Gastrocnemius medialis (tissue), 4 donors: ENCODE measurements at regions of chr6 and their contacts with region 1.

Region 1: GRCh38 chr6:42661540-42662153 is 60.8 kb downstream of the PRPH2 start:
- DNase-seq: peak; percentile 53 to 83
- ATAC-seq: peak; percentile 86 to 90
- H3K4me3 ChIP-seq: no peak overlapping the region
- H3K27ac ChIP-seq: peak overlapping the region in 3 of 4 donors; percentile 44 to 54 (median 49)
- H3K4me1 ChIP-seq: peaks cover 6 to 13% of the 10 kb centered on the region in 2 donors
- H3K27me3 ChIP-seq: no peaks in the 10 kb centered on the region
- CTCF ChIP-seq: peak; percentile 90 to 95 (median 92)
- POLR2A ChIP-seq: no peak

Region 2: DNA sequence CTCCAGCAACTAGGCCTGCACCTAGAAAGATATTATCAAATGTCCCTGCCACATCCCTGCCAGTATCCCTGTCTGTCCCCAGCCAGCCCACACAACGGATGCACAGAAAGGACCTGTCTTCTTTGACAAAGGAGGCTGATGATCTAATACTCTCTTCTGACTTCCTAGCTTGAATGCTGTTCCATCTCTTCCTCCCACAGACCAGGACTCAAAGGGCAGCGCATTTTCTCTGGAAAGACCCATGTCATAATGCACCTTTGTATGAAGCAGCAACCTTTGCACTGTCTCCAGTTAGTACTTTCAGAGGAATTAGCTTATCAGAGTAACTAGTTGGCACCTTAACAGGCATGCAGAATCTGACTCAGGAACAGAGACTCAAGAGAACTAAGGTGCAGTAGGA is 664.6 kb before region 1 on chr6:
- in situ Hi-C with region 1: no loop called
- intact Hi-C with region 1: no loop called
- DNase-seq: no peak
- ATAC-seq: no peak
- H3K4me3 ChIP-seq: no peak overlapping the region
- H3K27ac ChIP-seq: no peak overlapping the region
- H3K4me1 ChIP-seq: no peaks in the 10 kb centered on the region
- H3K27me3 ChIP-seq: no peaks in the 10 kb centered on the region
- CTCF ChIP-seq: no peak
- POLR2A ChIP-seq: no peak

Region 3: GRCh38 chr6:42720739-42721138 is 59.1 kb after region 1 on chr6:
- in situ Hi-C with region 1: loop called (anchors 5 kb)
- intact Hi-C with region 1: no loop called
- DNase-seq: no peak
- ATAC-seq: no peak
- H3K4me3 ChIP-seq: no peak overlapping the region
- H3K27ac ChIP-seq: no peak overlapping the region
- H3K4me1 ChIP-seq: peaks cover 6 to 23% of the 10 kb centered on the region in 2 donors
- H3K27me3 ChIP-seq: no peaks in the 10 kb centered on the region
- CTCF ChIP-seq: no peak
- POLR2A ChIP-seq: no peak

Region 4: GRCh38 chr6:42726485-42727086 is 64.9 kb after region 1 on chr6:
- in situ Hi-C with region 1: loop called (anchors 5 kb)
- intact Hi-C with region 1: loop called (anchors 1 kb)
- DNase-seq: peak; percentile 79 to 84
- ATAC-seq: peak; percentile 94 to 98
- H3K4me3 ChIP-seq: peak overlapping the region; percentile 55 to 74 (median 60)
- H3K27ac ChIP-seq: peak overlapping the region; percentile 72 to 86 (median 74)
- H3K4me1 ChIP-seq: peaks cover 13 to 27% of the 10 kb centered on the region in 2 donors
- H3K27me3 ChIP-seq: no peaks in the 10 kb centered on the region
- CTCF ChIP-seq: peak; percentile 90 to 98 (median 95)
- POLR2A ChIP-seq: no peak

Region 5: GRCh38 chr6:42879372-42880239 is 218.0 kb after region 1 on chr6 and contains the start of gene RPL7L1:
- in situ Hi-C with region 1: loop called (anchors 5 kb)
- intact Hi-C with region 1: loop called (anchors 1 kb)
- DNase-seq: peak; percentile 80 to 86
- ATAC-seq: peak; percentile 96 to 99
- H3K4me3 ChIP-seq: peak within 1 kb of the TSS; percentile 75 to 92 (median 80)
- H3K27ac ChIP-seq: peak within 1 kb of the TSS; percentile 85 to 96 (median 94)
- H3K4me1 ChIP-seq: peaks cover 23 to 24% of the 10 kb centered on the region in 2 donors
- H3K27me3 ChIP-seq: no peaks in the 10 kb centered on the region
- CTCF ChIP-seq: peak in 2 of 5 experiments; percentile 20 to 41
- POLR2A ChIP-seq: peak; percentile 64 to 80
- total RNA-seq, gene RPL7L1: 59.6 to 87.1 (median 65.2) TPM